MCF 10A (cell line): ENCODE measurements at regions of chr4 and their contacts with region 1.

Region 1: GRCh38 chr4:86223472-86223871 is 136.4 kb downstream of the MAPK10 start:
- DNase-seq: peak; percentile 63
- H3K4me3 Mint-ChIP-seq: no peak overlapping the region
- H3K27ac Mint-ChIP-seq: peak overlapping the region; percentile 41
- H3K4me1 Mint-ChIP-seq: peaks cover 20% of the 10 kb centered on the region
- H3K27me3 Mint-ChIP-seq: no peaks in the 10 kb centered on the region
- CTCF ChIP-seq: peak; percentile 61

Region 2: DNA sequence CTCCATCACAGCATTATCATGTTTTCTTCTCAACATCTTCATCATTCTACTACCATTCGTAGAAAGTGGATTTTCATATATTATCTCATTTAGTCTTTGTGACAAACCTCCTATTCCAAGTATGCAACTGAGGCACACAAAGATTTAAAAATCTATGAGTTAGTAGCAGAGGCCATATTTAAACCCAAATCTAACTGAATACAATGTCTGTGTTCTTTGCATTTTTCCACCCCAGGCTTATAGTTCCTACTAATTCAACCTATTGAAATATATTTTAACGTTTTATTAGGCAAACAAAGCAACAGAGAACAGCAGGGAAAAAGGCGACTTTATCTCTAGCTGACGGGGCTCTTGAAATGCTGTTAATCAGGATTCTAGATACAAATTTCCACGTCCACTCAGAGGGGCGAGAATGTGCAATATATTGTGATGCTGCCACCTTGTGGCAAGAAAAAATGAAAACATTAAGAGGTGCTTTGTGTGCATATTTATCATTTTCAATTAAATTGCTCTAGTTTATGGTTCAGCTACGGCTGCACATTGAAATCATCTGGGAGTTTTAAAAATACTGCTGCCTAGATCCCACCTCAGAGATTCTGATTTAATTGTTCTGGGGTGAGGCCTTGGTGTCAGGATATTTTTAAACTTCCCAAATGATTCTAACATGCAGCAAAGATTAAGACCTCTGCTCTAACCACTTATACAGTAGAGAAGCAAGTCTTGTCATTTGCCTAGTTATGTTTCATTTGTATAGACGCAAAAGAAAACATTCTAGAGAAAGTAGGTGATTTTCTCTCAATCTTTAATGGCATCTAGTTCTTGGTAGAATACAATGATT is 179.5 kb before region 1 on chr4:
- CTCF ChIA-PET with region 1: interaction called, 6 read pairs
- POLR2A ChIA-PET with region 1: no interaction called
- intact Hi-C with region 1: loop called (anchors 2 kb)
- DNase-seq: peak; percentile 71
- H3K4me3 Mint-ChIP-seq: no peak overlapping the region
- H3K27ac Mint-ChIP-seq: no peak overlapping the region
- H3K4me1 Mint-ChIP-seq: peaks cover 5% of the 10 kb centered on the region
- H3K27me3 Mint-ChIP-seq: no peaks in the 10 kb centered on the region
- CTCF ChIP-seq: peak; percentile 66

Region 3: GRCh38 chr4:86233681-86234080 is 10.2 kb after region 1 on chr4:
- CTCF ChIA-PET with region 1: interaction called, 19 read pairs
- POLR2A ChIA-PET with region 1: interaction called, 3 read pairs
- intact Hi-C with region 1: no loop called
- DNase-seq: no peak
- H3K4me3 Mint-ChIP-seq: no peak overlapping the region
- H3K27ac Mint-ChIP-seq: peak overlapping the region; percentile 39
- H3K4me1 Mint-ChIP-seq: peaks cover 7% of the 10 kb centered on the region
- H3K27me3 Mint-ChIP-seq: no peaks in the 10 kb centered on the region
- CTCF ChIP-seq: no peak

Region 4: DNA sequence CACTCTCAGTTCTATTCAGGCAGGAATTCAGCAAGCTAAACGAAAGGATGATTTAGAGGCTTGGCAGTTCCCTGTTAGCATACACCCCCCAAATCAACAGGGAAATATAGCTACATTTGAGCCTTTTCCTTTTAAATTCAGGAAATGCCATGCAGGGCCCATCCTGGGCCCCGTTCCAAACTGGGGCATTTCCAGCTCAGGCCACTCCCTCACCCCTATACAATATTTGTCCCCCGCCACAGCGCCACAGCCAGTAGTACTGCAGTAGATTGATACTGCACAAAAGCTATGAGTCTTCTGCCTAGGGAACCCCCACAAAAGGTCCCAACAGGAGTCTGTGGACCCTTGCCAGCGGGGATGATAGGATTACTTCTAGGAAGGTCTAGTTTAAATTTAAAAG is 238.4 kb after region 1 on chr4:
- CTCF ChIA-PET with region 1: no interaction called
- POLR2A ChIA-PET with region 1: no interaction called
- intact Hi-C with region 1: no loop called
- DNase-seq: no peak
- H3K4me3 Mint-ChIP-seq: no peak overlapping the region
- H3K27ac Mint-ChIP-seq: no peak overlapping the region
- H3K4me1 Mint-ChIP-seq: no peaks in the 10 kb centered on the region
- H3K27me3 Mint-ChIP-seq: no peaks in the 10 kb centered on the region
- CTCF ChIP-seq: no peak